Activated CD4-positive, alpha-beta T cell treated with anti-CD3 and anti-CD28 coated beads, Interleukin-2, amount 10 ng/mL, durations not matched to agents 24 days and 14 days (primary cell): ENCODE measurements at regions of chr6 and their contacts with region 1.

Region 1: DNA sequence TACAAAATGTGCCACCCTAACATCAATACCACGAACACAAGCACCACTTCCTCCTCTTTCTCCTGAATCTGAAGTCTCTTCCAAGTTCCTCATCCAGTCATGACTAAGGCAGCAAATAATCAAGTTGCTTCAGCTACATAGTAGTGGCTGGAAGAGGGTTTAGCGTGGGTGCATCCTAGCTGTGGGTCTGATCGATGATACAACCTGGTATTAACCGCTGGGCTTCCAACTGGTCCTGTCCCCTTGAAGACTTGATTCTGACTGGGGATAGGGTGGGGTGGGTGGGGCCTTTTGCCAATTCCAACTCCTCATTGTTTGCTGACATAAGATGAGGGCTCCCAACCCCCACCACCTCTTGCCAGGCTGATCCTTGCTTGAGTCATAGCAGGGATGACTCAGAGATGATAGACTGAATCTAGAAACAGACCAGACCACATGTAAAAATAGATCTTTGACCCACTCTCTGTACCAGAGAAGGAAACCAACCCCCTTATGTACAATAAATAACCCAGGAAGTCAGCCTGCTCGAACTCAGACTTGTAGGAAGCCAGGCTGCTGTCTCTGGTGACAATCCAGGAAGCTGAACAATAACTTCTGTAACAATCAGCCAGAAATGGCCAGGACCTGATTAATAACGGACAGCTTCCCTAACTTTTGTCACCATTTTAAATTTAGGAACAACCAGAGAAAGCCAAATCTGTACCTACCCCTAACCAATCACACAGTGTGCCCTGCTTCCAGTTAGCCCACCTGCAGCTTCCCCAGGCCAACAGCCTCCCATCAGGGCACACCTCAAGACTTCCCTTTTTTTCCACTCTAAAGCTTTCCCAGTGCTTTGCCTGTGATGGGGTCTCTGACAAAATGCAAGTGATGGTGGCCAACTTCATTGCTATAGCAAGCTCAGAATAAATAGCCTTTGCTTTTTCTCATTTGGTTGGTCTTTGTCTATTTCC is 68.9 kb upstream of the FAM184A start:
- DNase-seq: peak; percentile 78
- H3K4me3 Mint-ChIP-seq: peak overlapping the region; percentile 36
- H3K27ac Mint-ChIP-seq: peak overlapping the region; percentile 86
- H3K4me1 Mint-ChIP-seq: peaks cover 56% of the 10 kb centered on the region
- H3K27me3 Mint-ChIP-seq: no peaks in the 10 kb centered on the region

Region 2: GRCh38 chr6:119129148-119129967 is 18.0 kb before region 1 on chr6:
- intact Hi-C with region 1: loop called (anchors 1 kb)
- DNase-seq: peak; percentile 83
- H3K4me3 Mint-ChIP-seq: no peak overlapping the region
- H3K27ac Mint-ChIP-seq: peak overlapping the region; percentile 38
- H3K4me1 Mint-ChIP-seq: peaks cover 12% of the 10 kb centered on the region
- H3K27me3 Mint-ChIP-seq: peaks cover 5% of the 10 kb centered on the region

Region 3: GRCh38 chr6:119313937-119314884 is 166.8 kb after region 1 on chr6:
- intact Hi-C with region 1: loop called (anchors 2 kb)
- DNase-seq: peak; percentile 83
- H3K4me3 Mint-ChIP-seq: peak overlapping the region; percentile 81
- H3K27ac Mint-ChIP-seq: peak overlapping the region; percentile 98
- H3K4me1 Mint-ChIP-seq: peaks cover 71% of the 10 kb centered on the region
- H3K27me3 Mint-ChIP-seq: no peaks in the 10 kb centered on the region

Region 4: DNA sequence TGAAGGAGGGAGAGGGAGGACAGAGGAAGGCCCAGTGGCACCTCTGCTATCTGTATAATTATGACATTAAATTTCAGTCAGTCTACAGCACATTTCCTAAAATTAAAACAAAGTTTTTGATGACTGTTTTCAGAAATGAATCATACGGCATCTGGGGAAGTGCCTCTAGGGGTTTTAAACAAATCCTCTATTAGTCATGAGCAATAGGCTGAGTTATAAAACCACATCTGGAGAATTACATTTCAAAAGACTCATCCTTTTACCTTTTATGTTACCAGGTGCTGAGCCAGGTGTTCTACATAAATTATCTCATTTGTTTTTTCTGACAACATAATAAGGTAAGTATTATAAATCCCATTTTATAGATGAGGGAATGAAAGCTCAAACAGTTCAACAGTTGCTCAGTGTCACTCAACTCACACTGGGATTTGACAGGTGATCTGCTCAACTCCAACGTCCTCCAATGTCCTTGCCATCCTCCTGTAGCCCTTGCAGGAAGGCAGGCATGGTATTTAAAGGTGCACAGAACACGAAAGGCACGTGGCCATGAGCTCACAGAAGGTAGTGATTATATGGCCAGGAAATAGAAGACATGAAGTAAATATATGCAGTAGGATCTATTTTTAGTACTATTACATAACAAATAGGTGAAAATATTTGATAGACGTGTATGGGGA is 386.4 kb after region 1 on chr6:
- intact Hi-C with region 1: loop called (anchors 1 kb)
- DNase-seq: no peak
- H3K4me3 Mint-ChIP-seq: no peak overlapping the region
- H3K27ac Mint-ChIP-seq: no peak overlapping the region
- H3K4me1 Mint-ChIP-seq: peaks cover 8% of the 10 kb centered on the region
- H3K27me3 Mint-ChIP-seq: peaks cover 22% of the 10 kb centered on the region

Region 5: DNA sequence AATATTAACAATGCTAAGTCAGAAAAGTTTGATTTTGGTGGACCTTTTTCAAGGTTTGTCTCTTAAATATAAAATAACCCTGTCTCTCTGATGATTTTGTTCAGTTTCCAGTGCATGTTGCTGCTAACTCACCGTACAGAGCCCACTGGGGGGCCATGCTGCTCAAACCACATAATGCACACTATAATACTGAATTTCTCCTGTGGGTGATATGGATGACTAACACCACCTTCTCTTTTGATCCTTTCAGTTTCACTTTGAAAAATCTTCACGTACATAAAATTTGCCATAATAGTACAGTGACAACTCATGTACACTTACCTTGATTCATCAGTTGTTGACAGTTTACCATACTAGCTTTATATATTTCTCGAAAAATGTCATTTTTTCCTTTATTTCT is 708.8 kb after region 1 on chr6:
- intact Hi-C with region 1: loop called (anchors 2 kb)
- DNase-seq: peak; percentile 66
- H3K4me3 Mint-ChIP-seq: peak overlapping the region; percentile 32
- H3K27ac Mint-ChIP-seq: no peak overlapping the region
- H3K4me1 Mint-ChIP-seq: peaks cover 11% of the 10 kb centered on the region
- H3K27me3 Mint-ChIP-seq: peaks cover 7% of the 10 kb centered on the region